Posterior cingulate gyrus (tissue), 11 donors: ENCODE measurements at regions of chr20 and their contacts with region 1.

Region 1: GRCh38 chr20:44388466-44389023 is 33.0 kb downstream of the HNF4A start:
- DNase-seq: peak; percentile 38 to 95 (median 71)

Region 2: DNA sequence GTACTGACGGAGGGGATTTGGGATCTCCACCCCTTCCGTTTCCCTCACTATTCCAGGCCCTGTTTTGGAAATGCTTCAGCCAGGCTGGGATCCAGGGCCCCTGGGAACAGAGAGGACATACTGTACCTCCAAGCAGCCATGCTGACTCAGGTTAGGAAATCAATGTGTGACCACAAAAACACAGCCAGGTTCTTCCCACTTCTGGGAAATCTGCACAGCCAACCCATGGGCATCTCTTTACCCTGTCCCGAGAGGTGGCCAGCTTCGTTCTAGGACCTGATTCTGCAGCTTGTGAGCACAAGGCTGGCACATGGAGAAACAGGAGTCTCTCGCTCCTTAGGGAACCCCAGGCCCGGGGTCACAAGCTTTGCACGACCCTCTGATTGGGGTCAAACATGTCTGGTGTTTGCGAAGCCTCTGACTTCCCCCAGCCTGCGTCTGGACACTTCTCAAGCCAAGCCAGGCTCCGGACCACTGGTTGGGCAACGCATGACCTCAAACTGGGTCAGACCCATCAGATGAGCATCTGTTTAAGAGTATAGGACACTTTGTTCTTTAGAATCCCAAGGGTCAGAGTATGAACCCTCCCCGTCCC is 78.8 kb after region 1 on chr20:
- intact Hi-C with region 1: loop called (anchors 5 kb)
- DNase-seq: no peak